ENCODE measurements at regions of chr4 and their contacts with region 1.

Region 1: DNA sequence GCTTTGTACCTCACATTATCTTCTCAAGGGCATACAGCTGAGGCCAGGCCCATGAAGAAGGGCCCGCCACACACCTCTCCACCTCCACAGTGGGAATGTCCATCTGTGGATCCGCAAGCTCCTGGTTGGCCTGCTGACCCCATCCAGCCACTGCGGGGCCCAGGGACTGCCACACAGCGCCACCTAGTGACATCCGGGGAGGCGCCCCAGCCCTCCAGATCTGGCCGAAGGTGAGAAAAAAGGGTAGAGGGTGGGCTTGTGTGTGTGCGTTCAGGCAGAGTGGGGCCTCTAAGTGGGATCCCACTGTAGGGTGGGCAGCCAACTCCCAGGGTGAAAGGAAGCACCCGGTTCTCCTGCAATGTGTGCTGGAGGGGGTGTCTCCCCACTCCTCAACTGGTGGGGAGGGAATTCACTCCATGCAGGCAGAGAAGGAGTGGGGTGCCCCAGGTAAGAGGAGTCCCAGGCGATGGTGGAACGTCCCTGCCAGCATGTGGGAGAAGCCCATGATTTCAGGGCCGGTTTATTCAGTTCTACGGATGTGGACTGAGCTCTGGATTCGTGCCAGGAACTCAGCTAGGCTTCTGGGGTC is 117.3 kb downstream of the ENPP6 start:
- DNase-seq: peak; percentile 86
- ATAC-seq: peak; percentile 73

Region 2: GRCh38 chr4:183987987-183988392 is 112.4 kb before region 1 on chr4:
- intact Hi-C with region 1: loop called (anchors 5 kb)
- DNase-seq: peak; percentile 72
- ATAC-seq: peak; percentile 92

Region 3: GRCh38 chr4:184156163-184156920 is 56.0 kb after region 1 on chr4:
- intact Hi-C with region 1: loop called (anchors 2 kb)
- DNase-seq: no peak
- ATAC-seq: peak; percentile 69